ENCODE measurements at regions of chr7 and their contacts with region 1.

Region 1: DNA sequence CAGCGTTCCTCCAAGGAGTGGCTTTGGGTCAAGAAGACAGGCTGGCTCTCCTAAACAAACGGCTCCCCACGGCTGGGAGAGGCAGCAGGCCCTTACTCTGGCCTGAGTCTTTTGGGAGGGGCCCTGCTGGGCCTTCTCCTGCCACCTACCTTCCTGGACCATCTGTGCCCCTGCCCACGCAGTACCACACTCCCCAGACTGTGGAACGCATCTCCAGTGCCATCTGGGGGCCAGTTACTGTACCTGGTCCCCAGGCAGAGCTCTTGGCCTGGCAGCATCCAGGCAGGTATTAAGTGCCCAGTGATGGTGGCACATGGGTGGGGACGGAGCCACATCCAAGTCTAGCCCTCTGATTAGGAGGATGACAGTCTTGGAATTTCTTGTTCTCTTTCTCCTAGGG is 14.4 kb downstream of the ALKBH4 start:
- DNase-seq: peak in 8 of 9 experiments; percentile 31 to 73 (median 63)
- ATAC-seq: peak; percentile 95
- H3K4me3 ChIP-seq: no peak overlapping the region
- H3K4me3 Mint-ChIP-seq: no peak overlapping the region
- H3K27ac ChIP-seq: no peak overlapping the region
- H3K27ac Mint-ChIP-seq: no peak overlapping the region
- H3K4me1 ChIP-seq: no peaks in the 10 kb centered on the region
- H3K4me1 Mint-ChIP-seq: no peaks in the 10 kb centered on the region
- H3K27me3 ChIP-seq: no peaks in the 10 kb centered on the region
- H3K27me3 Mint-ChIP-seq: no peaks in the 10 kb centered on the region
- CTCF ChIP-seq: peak; percentile 54

Region 2: DNA sequence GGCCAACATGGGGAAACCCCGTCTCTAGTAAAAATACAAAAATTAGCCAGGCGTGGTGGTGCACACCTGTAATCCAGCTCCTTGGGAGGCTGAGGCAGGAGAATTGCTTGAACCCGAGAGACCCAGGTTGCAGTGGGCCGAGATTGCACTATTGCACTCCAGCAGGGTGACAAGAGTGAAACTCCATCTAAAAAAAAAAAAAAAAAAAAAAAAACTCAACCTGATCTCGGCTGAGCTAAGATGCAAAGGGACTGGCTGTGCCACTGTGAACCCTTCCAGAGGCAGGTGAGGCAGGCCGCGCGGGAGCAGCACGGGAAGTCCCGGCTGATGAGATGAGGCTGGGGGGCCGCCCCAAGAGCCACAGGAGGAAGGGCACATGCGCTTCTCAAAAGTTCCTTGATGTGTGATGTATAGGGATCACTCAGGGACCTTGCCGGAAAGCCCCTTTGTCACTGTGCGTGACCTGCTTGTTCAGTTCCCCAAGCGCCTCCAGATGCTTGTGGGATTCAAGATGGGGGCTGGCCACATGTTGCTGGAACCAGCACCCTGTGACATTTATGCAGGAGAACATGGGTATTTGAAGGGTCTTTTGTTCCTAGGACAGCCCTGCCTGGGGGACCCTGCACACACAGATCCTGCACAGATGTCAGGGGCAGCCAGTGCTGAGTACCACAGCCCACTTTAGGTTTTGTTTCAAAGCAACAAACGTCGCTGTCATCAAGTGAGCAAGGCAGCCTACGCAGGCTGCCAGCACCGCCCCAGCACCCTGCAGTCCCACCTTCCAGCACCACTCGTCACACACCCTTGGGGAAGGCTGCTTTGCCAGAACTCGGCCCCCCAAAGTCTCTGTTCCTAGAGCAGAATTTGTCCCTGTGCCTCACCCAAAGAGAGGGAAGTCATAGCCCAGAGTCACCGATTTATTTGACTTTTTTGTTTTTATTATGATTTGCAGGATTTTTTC is 238.4 kb before region 1 on chr7:
- CTCF ChIA-PET with region 1: no interaction called
- POLR2A ChIA-PET with region 1: no interaction called
- intact Hi-C with region 1: no loop called
- DNase-seq: no peak
- ATAC-seq: no peak
- H3K4me3 ChIP-seq: no peak overlapping the region
- H3K4me3 Mint-ChIP-seq: no peak overlapping the region
- H3K27ac ChIP-seq: no peak overlapping the region
- H3K27ac Mint-ChIP-seq: no peak overlapping the region
- H3K4me1 ChIP-seq: no peaks in the 10 kb centered on the region
- H3K4me1 Mint-ChIP-seq: no peaks in the 10 kb centered on the region
- H3K27me3 ChIP-seq: no peaks in the 10 kb centered on the region
- H3K27me3 Mint-ChIP-seq: no peaks in the 10 kb centered on the region
- CTCF ChIP-seq: no peak

Region 3: DNA sequence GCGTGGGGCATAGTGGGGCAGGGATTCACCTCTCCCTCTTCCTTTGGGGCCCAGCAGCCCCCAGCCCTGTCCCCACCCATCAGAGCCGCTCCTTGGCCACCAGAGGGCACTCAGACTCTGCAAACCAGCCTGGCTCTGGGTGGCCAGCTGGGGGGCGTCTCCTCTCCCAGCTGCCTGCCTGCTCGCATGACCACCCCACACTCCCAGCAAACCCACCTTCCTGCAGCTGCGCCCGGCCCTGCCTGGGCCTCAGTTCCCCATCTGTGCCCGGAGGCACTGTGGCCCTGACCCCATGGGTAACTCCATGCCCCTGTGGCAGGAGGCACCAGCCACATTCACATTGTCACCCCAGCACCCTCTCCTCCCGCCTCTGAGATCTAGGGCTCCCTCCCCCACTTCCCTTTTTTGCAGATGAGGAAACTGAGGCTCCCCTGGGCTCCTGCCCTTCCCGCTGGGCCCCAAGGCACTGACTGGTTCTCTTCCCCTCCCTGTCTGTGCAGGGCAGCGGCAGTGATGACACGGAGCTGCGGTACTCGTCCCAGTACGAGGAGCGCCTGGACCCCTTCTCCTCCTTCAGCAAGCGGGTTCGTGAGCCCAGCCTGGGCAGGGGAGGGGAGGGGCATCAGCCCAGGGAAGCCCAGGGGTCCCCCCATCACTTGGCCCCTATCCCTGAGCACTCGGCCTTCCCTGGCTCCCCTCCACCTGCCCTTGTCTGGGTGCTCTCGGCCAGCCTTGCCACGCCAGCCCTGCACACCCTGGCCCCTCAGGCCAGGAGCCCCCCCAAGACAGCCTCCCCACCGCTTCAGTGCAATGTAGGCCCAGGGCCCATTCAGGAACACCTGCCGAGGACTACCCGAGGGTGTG is 170.5 kb before region 1 on chr7:
- CTCF ChIA-PET with region 1: no interaction called
- POLR2A ChIA-PET with region 1: no interaction called
- intact Hi-C with region 1: loop called in 1 of 2 experiments (anchors 2 kb)
- DNase-seq: peak; percentile 23 to 78 (median 61)
- ATAC-seq: peak; percentile 89
- H3K4me3 ChIP-seq: no peak overlapping the region
- H3K4me3 Mint-ChIP-seq: no peak overlapping the region
- H3K27ac ChIP-seq: no peak overlapping the region
- H3K27ac Mint-ChIP-seq: no peak overlapping the region
- H3K4me1 ChIP-seq: peaks cover 4% of the 10 kb centered on the region
- H3K4me1 Mint-ChIP-seq: peaks cover 7% of the 10 kb centered on the region
- H3K27me3 ChIP-seq: no peaks in the 10 kb centered on the region
- H3K27me3 Mint-ChIP-seq: no peaks in the 10 kb centered on the region
- CTCF ChIP-seq: peak; percentile 62

Region 4: DNA sequence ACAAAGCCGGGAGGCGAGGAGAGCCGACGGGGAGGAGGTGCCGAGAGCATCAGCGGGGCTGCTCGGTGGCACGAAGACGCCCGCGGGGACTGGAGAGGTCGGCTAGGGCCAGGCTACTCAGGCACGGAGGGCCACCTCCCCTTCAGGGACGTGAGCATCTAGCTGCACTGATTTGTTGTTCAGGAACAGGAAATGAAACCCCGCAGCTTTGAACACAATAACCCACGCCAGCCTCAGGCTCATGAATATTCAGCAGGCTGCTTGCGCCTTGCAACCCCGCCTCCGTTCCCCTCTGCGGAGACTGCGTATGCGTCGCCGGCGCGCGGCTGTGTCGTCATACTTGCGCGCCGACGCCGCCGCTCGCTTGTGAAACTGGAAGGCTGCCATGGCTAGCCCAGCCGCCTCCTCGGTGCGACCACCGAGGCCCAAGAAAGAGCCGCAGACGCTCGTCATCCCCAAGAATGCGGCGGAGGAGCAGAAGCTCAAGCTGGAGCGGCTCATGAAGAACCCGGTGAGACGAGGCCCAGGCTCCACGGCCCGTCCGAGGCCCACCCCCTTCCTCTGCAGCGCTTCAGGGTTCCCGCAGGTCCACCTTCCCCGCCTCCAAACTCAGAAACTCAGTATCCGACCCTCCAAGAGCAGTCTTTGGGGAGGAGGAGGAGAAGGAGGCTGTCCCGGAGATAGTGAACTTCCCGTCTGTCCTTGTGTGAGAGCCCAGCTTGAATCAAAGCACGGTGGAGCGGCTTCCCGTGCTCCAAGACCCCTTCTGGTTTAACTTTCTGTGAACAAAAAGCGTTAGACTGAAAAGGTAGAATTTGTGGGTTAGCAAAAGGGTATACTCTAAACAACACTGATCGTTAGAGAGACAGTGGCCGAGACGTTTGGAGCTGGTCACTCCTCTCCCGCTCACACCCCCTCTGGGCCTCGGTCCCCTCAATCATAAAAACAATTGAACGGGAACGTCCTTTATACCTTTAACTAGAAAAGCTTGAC is 53.9 kb before region 1 on chr7 and contains the start of gene PRKRIP1:
- CTCF ChIA-PET with region 1: interaction called, 13 read pairs
- POLR2A ChIA-PET with region 1: interaction called, 3 read pairs
- intact Hi-C with region 1: no loop called
- DNase-seq: peak; percentile 68 to 97 (median 84)
- ATAC-seq: peak; percentile 96
- H3K4me3 ChIP-seq: peak within 1 kb of the TSS; percentile 84 to 92
- H3K4me3 Mint-ChIP-seq: peak within 1 kb of the TSS; percentile 96
- H3K27ac ChIP-seq: peak within 1 kb of the TSS; percentile 82 to 84
- H3K27ac Mint-ChIP-seq: peak within 1 kb of the TSS; percentile 97
- H3K4me1 ChIP-seq: peaks cover 13% of the 10 kb centered on the region
- H3K4me1 Mint-ChIP-seq: peaks cover 26% of the 10 kb centered on the region
- H3K27me3 ChIP-seq: no peaks in the 10 kb centered on the region
- H3K27me3 Mint-ChIP-seq: no peaks in the 10 kb centered on the region
- CTCF ChIP-seq: no peak
- total RNA-seq, gene PRKRIP1: 51.1 to 57.2 TPM

Region 5: DNA sequence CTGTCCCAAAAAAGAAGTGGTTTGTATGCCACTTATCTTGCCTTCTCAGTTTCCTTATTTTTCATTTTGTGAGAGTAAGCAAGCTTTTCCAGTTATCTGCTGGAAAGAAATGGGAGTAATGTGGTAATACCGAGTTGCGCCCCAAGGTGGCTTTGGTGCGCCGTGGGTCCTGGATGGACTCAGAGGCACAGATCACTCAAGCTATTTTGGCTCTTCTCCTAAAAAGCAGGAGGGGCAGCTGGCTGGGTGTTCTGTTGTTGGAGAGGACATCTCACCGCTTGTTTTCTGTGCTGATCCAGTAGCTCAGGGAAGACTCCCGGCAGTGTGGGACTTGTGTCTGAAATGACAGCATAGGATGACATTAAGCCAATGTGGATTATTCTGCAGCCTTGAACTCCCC is 37.7 kb before region 1 on chr7:
- CTCF ChIA-PET with region 1: interaction called, 65 read pairs
- POLR2A ChIA-PET with region 1: interaction called, 9 read pairs
- intact Hi-C with region 1: loop called (anchors 1 kb)
- DNase-seq: peak in 7 of 9 experiments; percentile 38 to 71 (median 62)
- ATAC-seq: peak; percentile 32
- H3K4me3 ChIP-seq: no peak overlapping the region
- H3K4me3 Mint-ChIP-seq: no peak overlapping the region
- H3K27ac ChIP-seq: no peak overlapping the region
- H3K27ac Mint-ChIP-seq: no peak overlapping the region
- H3K4me1 ChIP-seq: peaks cover 37% of the 10 kb centered on the region
- H3K4me1 Mint-ChIP-seq: peaks cover 40% of the 10 kb centered on the region
- H3K27me3 ChIP-seq: no peaks in the 10 kb centered on the region
- H3K27me3 Mint-ChIP-seq: no peaks in the 10 kb centered on the region
- CTCF ChIP-seq: peak; percentile 66

Region 6: DNA sequence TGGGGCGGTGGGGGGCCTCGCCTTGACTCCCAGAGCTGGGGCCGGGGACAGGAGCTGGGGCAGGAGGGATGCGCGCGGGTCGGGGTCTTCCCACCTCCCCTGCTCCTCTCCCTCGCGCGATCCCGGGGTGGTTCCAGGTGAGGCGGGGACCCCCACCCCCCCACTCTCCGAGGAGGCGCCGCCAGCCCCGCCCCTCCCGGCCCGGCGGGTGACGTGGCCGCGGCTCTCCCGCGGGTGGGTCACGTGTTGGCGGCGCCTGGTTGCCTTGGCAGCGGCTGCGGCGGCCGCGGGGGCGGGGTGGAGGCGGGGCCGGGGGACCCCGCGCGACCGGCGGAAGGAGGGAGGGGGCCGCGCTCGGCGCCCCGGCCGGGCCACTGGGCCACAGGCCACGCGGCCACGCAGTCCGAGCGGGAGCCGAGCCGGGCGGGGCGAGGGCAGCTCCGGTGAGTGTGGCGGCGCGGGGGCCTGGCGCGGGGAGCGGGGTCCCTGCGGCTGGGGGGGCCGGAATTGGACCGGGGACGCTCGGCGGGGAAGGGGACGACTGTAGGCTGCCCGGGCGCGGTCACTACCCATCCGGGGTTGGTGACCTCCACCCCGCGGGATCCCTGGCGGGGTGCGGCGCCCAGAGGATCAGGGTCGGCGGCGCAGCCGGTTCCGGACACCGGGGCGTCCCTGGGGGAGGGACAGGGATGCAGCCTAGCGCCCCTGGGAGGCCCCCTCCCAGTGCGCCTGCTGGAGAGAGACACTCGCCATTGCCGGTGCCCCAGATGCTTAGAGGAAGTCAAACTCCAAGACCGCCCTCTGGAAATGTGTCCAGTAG is 16.8 kb before region 1 on chr7 and contains the start of gene ORAI2:
- CTCF ChIA-PET with region 1: interaction called, 18 read pairs
- POLR2A ChIA-PET with region 1: no interaction called
- intact Hi-C with region 1: no loop called
- DNase-seq: peak; percentile 76 to 92 (median 87)
- ATAC-seq: peak; percentile 55
- H3K4me3 ChIP-seq: peak within 1 kb of the TSS; percentile 78 to 82
- H3K4me3 Mint-ChIP-seq: peak within 1 kb of the TSS; percentile 82
- H3K27ac ChIP-seq: peak within 1 kb of the TSS; percentile 71 to 94
- H3K27ac Mint-ChIP-seq: peak within 1 kb of the TSS; percentile 100
- H3K4me1 ChIP-seq: peaks cover 57% of the 10 kb centered on the region
- H3K4me1 Mint-ChIP-seq: peaks cover 54% of the 10 kb centered on the region
- H3K27me3 ChIP-seq: no peaks in the 10 kb centered on the region
- H3K27me3 Mint-ChIP-seq: no peaks in the 10 kb centered on the region
- CTCF ChIP-seq: no peak
- total RNA-seq, gene ORAI2: 20.4 to 25.5 TPM

Measured in CD8-positive, alpha-beta T cell (primary cell).